Thyroid gland (tissue), 4 donors: ENCODE measurements at regions of chr1 and their contacts with region 1.

Region 1: GRCh38 chr1:47437447-47438164 is at the start of gene FOXD2:
- DNase-seq: peak; percentile 81 to 83
- H3K4me3 ChIP-seq: peak within 1 kb of the TSS; percentile 43 to 80 (median 80)
- H3K27ac ChIP-seq: peak within 1 kb of the TSS; percentile 42 to 76 (median 70)
- H3K4me1 ChIP-seq: peaks cover 17 to 34% of the 10 kb centered on the region in 2 donors
- H3K27me3 ChIP-seq: peaks cover 26% of the 10 kb centered on the region
- CTCF ChIP-seq: peak; percentile 87 to 100 (median 99)
- POLR2A ChIP-seq: peak in 1 of 2 donors; percentile 38
- total RNA-seq, gene FOXD2: 0.11 to 0.54 TPM in 2 of 4 donors, not detected in the others

Region 2: DNA sequence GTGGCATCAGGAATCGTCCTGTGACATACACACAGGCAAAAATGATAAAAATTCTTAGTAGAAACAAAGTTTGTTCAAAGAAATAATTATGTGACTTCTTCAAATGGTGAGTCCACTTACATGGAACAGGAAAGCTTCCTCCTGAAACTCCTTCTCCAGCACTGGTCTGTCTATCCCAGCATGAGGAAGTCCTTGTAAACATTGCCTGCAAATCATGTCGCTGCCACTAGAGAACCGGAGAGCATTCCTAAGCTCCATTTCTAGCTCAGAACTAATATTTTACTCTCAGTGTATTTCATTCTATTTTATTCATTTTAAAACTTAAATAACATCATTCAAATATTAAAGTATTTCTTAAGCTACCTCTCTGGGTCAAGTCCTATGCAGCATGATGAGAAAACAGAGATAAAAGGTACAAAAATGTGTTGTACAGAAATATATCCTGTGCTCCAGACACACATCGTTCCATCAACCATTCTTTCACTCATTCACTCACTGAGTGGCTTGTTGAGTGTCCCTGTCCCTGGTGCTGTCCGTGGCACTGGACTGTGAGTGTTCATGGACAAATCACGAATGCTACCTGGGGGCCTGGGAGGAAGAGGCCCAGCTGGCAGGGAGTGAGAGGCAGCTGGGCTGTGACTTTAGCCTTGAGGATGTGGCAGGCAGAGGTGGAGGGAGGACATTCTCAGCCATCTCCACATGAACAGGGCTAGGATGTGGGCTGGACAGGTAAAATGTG is 290.4 kb before region 1 on chr1:
- intact Hi-C with region 1: no loop called
- DNase-seq: no peak
- H3K4me3 ChIP-seq: no peak overlapping the region
- H3K27ac ChIP-seq: no peak overlapping the region
- H3K4me1 ChIP-seq: no peaks in the 10 kb centered on the region
- H3K27me3 ChIP-seq: no peaks in the 10 kb centered on the region
- CTCF ChIP-seq: no peak
- POLR2A ChIP-seq: no peak

Region 3: GRCh38 chr1:47388891-47389238 is 48.7 kb before region 1 on chr1:
- intact Hi-C with region 1: loop called (anchors 5 kb)
- DNase-seq: peak; percentile 46 to 57
- H3K4me3 ChIP-seq: no peak overlapping the region
- H3K27ac ChIP-seq: no peak overlapping the region
- H3K4me1 ChIP-seq: no peaks in the 10 kb centered on the region
- H3K27me3 ChIP-seq: no peaks in the 10 kb centered on the region
- CTCF ChIP-seq: peak in 4 of 6 experiments; percentile 37 to 70 (median 54)
- POLR2A ChIP-seq: no peak

Region 4: DNA sequence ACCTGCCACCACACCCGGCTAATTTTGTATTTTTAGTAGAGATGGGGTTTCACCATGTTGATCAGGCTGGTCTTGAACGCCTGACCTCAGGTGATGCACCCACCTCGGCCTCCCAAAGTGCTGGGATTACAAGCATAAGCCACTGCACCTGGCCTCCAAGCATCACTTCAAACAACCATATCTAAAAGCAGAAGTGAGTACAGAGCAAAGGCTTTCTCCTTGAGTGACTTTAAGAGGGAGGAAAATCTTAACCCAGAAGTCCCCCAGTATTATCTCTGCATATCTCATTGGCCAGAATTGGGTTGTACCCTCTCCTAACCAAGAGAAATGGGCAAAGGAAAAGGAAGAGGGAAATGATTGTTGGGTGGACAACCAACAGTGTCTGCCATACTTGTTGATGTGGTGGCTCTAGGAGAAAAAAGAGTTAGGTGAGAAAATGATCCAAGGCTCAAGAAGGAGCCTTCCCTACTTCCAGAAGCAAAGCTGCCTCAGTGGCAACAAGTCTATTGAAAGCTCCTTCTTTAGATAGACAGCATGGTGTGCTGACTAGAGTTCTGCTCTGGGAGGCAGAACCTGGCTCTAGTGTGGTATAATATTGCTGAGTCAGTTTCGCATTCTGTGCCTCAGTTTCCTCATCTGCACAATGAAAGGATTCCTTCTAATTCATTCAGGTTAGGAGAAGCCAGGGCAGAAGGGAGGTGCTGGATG is 38.3 kb before region 1 on chr1:
- intact Hi-C with region 1: no loop called
- DNase-seq: no peak
- H3K4me3 ChIP-seq: no peak overlapping the region
- H3K27ac ChIP-seq: no peak overlapping the region
- H3K4me1 ChIP-seq: no peaks in the 10 kb centered on the region
- H3K27me3 ChIP-seq: no peaks in the 10 kb centered on the region
- CTCF ChIP-seq: no peak
- POLR2A ChIP-seq: no peak

Region 5: GRCh38 chr1:47710329-47711071 is 272.9 kb after region 1 on chr1:
- intact Hi-C with region 1: loop called (anchors 2 kb)
- DNase-seq: peak; percentile 70 to 71
- H3K4me3 ChIP-seq: no peak overlapping the region
- H3K27ac ChIP-seq: no peak overlapping the region
- H3K4me1 ChIP-seq: peaks cover 13 to 23% of the 10 kb centered on the region in 2 donors
- H3K27me3 ChIP-seq: peaks cover 35% of the 10 kb centered on the region
- CTCF ChIP-seq: peak in 5 of 6 experiments; percentile 74 to 94 (median 91)
- POLR2A ChIP-seq: no peak